ENCODE measurements at regions of chr1 and their contacts with region 1.

Region 1: GRCh38 chr1:222911866-222912265 is 97.0 kb downstream of the DISP1 start:
- DNase-seq: no peak
- ATAC-seq: no peak
- H3K4me3 ChIP-seq: no peak overlapping the region
- H3K4me3 Mint-ChIP-seq: no peak overlapping the region
- H3K27ac ChIP-seq: no peak overlapping the region
- H3K27ac Mint-ChIP-seq: no peak overlapping the region
- H3K4me1 ChIP-seq: no peaks in the 10 kb centered on the region
- H3K4me1 Mint-ChIP-seq: no peaks in the 10 kb centered on the region
- H3K27me3 ChIP-seq: no peaks in the 10 kb centered on the region
- H3K27me3 Mint-ChIP-seq: no peaks in the 10 kb centered on the region

Region 2: GRCh38 chr1:222928212-222928611 is 16.3 kb after region 1 on chr1:
- CTCF ChIA-PET with region 1: no interaction called
- POLR2A ChIA-PET with region 1: no interaction called
- intact Hi-C with region 1: loop called in 1 of 2 experiments (anchors 2 kb)
- DNase-seq: no peak
- ATAC-seq: no peak
- H3K4me3 ChIP-seq: no peak overlapping the region
- H3K4me3 Mint-ChIP-seq: no peak overlapping the region
- H3K27ac ChIP-seq: no peak overlapping the region
- H3K27ac Mint-ChIP-seq: no peak overlapping the region
- H3K4me1 ChIP-seq: no peaks in the 10 kb centered on the region
- H3K4me1 Mint-ChIP-seq: no peaks in the 10 kb centered on the region
- H3K27me3 ChIP-seq: no peaks in the 10 kb centered on the region
- H3K27me3 Mint-ChIP-seq: no peaks in the 10 kb centered on the region